ENCODE measurements at regions of chr10 and their contacts with region 1.

Region 1: DNA sequence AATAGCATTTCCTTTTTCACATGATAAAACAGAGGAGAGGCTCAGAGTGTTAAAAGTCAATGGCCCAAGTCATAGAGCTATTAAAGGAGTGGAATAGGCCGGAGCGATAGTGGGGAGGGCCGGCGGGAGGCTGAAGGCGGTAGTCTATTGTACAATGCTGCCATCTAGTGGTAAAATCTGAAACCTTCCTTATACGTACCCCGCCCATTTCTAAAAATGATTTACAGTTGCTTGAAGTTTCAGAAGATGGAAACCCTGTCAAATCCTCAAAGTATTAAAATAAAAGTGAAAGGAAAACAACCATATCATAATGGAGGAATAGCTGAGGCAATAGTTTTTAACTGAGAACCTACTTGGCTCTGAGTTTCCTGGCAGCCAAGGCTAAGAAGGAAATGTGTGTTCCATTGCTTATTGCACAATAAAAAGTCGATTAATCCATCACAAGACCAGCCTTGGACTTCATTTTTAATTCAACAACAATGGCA is 209.1 kb downstream of the CCSER2 start:
- DNase-seq: peak; percentile 66

Region 2: GRCh38 chr10:84264611-84265141 is 272.8 kb before region 1 on chr10:
- CTCF ChIA-PET with region 1: interaction called, 33 read pairs
- POLR2A ChIA-PET with region 1: interaction called, 4 read pairs
- DNase-seq: peak; percentile 81

Region 3: DNA sequence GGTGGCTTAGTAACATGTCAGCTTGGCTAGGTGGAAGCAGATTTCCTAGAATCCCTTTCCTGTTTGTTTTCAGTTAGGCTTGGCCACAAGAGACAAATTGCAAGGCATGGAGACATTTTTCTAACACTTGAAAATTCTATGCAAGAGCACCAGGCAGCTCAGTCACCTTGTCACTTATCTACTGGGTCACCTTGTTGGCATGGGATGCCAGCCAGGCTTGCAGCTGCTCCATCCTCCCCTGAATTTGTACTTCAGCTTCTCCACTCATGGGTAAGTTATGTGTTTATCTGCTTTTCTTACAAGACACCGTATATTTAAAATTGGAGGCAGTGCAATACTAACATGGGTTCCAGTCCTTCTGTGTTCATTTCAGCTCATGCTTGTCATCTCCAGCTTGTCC is 249.3 kb before region 1 on chr10:
- CTCF ChIA-PET with region 1: no interaction called
- POLR2A ChIA-PET with region 1: no interaction called
- DNase-seq: no peak

Region 4: GRCh38 chr10:84352251-84352842 is 185.1 kb before region 1 on chr10:
- CTCF ChIA-PET with region 1: interaction called, 15 read pairs
- POLR2A ChIA-PET with region 1: no interaction called
- DNase-seq: peak; percentile 69

Region 5: DNA sequence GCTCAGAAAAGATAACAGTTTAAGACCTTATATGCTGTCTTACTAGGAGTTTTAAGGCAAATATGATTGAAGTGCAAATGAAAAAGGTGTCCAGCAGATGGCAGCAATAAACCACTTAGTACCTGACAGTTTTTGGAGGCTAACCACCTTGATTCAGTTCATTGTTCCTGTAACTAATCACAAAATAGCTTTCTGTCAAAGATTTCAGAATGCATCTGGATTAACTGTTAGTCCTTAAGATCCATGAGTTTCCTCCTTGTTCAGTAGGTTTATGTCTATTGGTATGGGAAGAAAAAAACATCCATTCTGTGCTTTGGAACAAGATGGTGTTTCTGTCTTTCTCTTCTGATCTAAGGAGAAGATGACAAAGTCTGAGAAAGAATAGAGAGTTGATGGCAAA is 162.5 kb before region 1 on chr10:
- CTCF ChIA-PET with region 1: interaction called, 10 read pairs
- POLR2A ChIA-PET with region 1: no interaction called
- DNase-seq: peak; percentile 19

Region 6: DNA sequence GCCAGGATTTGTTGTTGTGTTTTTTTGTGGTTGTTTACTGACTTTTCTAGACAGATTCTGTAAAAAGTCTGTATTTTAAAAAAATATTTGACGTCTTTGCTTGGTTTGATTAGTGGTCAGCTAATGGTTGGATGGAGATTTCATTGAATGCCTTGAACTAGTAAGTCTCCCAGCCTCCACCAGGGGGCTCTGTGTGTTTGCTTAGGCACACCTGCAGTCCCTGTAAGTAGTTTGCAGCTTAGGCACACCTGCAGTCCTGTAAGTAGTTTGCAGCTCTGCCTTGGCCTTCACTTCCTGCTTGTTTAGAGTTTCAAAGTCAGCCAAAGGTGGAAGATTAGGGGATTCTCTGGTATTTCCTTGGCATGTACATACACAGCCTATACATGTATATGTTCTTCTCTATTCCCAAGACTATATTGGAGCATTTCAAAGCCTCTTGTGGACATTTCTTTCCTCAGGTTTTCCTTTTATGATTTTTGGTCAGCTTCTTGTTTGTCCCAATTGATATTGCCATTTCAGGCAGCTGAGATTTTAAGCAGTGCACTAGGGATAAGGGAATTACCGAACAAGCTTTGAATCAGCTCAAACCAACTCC is 107.5 kb before region 1 on chr10:
- CTCF ChIA-PET with region 1: interaction called, 15 read pairs
- POLR2A ChIA-PET with region 1: no interaction called
- DNase-seq: peak; percentile 59

Region 7: DNA sequence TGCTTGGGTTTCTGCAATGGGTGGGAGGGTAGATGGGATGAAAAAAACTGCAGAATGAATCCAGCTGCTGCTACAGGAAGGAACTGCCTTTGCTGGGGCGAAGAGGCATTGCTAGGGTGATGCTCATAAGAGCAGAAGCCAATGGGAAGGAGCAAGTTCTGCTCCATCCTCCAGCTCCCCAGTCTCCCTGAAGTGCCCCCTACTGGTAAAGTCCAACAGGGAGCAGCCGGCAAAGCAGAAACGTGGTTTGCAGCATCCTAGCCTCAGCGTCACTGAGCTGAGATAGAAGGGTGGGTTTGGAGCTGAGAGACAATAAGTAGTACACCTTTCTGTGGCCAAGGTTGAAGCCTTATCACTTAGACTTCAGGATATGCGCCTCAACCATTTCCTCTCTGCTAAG is 11.4 kb after region 1 on chr10:
- CTCF ChIA-PET with region 1: interaction called, 10 read pairs
- POLR2A ChIA-PET with region 1: no interaction called
- DNase-seq: peak; percentile 37

Region 8: DNA sequence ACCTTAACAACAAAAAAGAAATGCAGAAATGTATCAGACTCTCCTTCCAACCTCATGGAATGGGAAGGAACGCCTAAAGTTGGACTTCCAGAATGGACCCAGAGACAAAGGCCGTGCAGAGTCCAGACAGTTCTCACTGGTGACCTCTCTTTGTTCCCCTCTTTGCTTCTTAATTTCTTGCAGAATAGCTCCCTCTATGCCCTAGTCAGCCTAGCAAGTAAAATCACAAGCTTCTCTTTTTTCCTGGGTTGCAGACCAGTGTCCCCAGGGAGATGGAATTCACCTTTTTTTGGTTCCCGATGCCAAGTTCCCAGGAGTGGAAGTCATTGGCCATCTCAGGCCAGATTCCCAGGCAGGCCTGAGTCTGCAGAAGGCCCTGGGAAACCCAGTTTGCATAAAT is 68.9 kb after region 1 on chr10:
- CTCF ChIA-PET with region 1: interaction called, 14 read pairs
- POLR2A ChIA-PET with region 1: no interaction called
- DNase-seq: no peak

Region 9: DNA sequence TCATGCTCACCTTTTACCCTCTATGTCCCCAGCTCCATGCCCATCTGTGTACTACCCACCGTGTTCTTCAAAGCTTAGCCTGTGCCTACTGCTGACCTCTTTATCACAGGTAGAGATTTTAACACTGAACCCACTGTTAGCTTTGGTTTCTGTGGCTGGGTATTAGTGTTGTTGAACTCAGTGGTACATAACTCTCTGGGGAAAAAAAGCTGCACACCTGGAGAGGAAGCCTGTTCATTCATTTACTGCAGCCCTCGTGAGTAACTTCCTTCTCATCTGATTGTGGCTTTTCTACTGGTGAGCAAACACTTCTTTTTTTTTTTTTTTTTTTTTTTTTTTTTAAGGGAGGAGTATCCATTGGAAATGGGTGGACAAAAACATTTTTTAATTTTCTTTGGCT is 117.2 kb after region 1 on chr10:
- CTCF ChIA-PET with region 1: no interaction called
- POLR2A ChIA-PET with region 1: no interaction called
- DNase-seq: no peak

Measured in HEK293T (cell line).